ENCODE measurements at regions of chr13 and their contacts with region 1.

Region 1: GRCh38 chr13:59906413-59907049 is 257.2 kb downstream of the DIAPH3 start:
- DNase-seq: no peak

Region 2: DNA sequence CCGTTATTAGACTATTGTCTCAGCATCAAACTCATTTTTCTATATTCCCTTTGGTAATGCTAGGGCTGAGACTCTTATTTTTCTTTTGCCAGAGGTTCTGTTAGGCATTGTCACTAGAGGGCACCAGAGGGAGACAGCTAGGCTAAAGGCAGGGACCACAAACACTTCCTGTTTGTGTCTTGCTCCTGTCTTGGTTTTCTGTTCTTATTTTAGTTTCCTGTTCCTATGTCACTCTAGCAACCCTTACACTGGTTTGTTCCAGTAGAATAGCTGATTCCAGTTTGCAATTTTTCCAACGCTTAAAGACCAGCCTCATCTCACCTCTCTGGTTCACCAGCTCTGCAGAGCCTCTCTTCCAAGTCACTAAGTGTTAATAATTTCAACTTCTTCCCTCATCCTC is 514.8 kb before region 1 on chr13:
- intact Hi-C with region 1: loop called (anchors 10 kb)
- DNase-seq: peak in 2 of 10 donors; percentile 26 to 66

Region 3: DNA sequence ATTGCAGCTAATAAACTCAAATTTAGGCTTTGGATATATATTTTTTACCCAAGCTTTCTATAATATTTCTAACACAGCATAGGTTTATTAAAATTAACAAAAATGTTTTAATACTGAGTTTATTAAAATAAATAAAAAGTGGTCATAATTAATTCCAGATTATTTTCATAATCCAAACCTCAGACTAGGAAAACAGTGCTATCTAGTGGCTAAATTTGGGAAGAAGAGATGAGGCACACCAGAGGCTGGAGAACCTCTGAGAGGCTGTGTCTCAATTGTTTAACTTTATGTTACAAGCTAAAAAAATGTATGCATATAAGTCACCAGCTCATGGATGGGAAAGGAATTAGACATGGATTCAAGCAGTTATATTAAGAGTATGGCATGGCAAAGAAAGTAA is 135.3 kb before region 1 on chr13:
- intact Hi-C with region 1: loop called (anchors 2 kb)
- DNase-seq: no peak

Region 4: DNA sequence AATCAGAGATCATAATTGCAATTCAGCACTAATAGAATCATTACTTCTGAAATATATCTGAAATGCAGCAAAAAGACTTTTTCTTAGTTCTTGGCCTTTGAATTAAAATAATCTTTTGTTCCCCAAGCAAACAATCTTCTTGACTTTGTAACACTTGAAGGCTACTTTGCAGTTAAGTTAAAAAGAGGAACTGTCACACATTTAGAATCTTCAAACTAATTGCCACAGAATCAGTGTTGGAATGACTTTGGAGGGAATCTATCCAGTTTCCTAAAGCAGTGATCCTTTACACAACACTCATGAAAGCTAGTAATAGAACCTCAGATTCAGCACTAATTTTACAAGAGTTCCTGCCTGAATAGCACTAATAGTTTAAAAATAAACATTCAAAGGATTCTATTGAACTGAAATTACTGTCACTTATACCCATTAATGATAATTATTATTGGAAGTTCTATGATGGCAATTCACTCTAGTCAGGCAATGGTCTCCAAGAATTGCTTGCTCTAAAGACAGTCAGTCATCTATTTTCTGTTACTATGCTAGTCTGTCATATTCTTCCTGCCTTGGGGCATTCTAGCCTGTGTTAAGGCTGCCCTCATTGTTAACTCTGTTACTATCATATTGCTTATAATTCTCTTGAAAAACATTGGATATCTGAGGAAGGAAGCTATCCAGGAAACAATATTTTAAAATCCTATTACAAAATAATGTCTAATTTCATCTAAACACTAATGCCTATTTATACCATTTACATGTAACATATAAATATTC is 105.2 kb before region 1 on chr13:
- intact Hi-C with region 1: no loop called
- DNase-seq: no peak

Region 5: DNA sequence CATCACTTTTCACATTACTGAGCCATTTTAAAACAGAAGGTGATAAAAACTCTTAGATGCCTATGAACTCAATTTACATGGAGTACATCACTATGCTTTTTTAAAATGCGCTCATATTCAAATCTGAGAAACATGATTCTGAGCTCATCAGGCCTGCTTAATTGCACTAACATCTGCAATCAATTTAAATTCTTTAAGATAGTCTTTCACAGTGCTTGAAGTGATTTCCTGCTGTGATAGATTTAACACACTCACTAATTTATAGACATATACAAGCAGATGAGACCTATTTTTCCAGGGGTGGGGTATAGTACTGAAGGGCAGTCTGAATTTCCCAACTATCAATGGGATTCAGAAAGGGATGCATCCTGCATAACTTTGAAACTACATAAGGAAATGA is 174.3 kb after region 1 on chr13:
- intact Hi-C with region 1: no loop called
- DNase-seq: no peak